ENCODE measurements at regions of chr11 and their contacts with region 1.

Region 1: GRCh38 chr11:36564376-36565030 is 3.3 kb upstream of the RAG1 start:
- DNase-seq: peak; percentile 69
- ATAC-seq: peak; percentile 66
- H3K4me3 Mint-ChIP-seq: peak overlapping the region; percentile 2
- H3K27ac Mint-ChIP-seq: no peak overlapping the region
- H3K4me1 Mint-ChIP-seq: no peaks in the 10 kb centered on the region
- H3K27me3 Mint-ChIP-seq: peaks cover 32% of the 10 kb centered on the region

Region 2: GRCh38 chr11:36361901-36362391 is 202.6 kb before region 1 on chr11:
- CTCF ChIA-PET with region 1: no interaction called
- POLR2A ChIA-PET with region 1: no interaction called
- intact Hi-C with region 1: no loop called
- DNase-seq: no peak
- ATAC-seq: peak; percentile 48
- H3K4me3 Mint-ChIP-seq: peak overlapping the region; percentile 45
- H3K27ac Mint-ChIP-seq: peak overlapping the region; percentile 80
- H3K4me1 Mint-ChIP-seq: peaks cover 54% of the 10 kb centered on the region
- H3K27me3 Mint-ChIP-seq: peaks cover 18% of the 10 kb centered on the region

Region 3: DNA sequence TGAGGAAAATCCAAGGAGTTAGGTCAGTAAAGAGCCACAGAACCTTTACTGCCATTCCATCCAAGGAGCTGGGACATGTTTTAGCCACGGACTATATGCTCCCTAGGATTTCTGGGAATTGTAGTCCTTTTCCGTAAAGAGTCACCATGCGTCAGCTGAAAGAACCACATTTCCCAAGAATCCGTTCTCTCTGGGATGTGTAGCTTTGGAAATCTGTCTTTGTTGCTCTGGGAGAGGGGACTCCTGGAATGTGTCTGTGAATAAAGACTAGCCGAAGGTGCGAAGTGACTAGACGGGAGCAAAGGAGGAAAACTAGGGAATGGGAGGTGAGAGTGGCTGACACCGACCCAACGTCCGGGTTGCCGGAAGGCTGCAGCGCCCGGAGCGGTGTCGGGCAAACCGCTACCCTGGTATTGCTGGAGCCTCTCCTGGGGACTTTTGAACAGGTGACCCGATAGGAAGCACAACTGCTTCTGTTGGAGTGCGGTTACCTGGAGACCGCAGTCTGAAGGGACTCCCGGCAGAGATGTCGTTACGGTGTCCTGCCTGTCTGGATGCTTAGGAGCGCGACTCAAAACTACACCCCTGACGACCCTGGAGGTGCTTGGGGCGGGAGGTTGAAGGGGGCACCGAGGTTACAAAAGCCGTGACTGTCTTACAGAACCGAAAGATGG is 29.9 kb after region 1 on chr11 and contains the start of gene IFTAP:
- CTCF ChIA-PET with region 1: interaction called, 11 read pairs
- POLR2A ChIA-PET with region 1: no interaction called
- intact Hi-C with region 1: no loop called
- DNase-seq: peak; percentile 62
- ATAC-seq: peak; percentile 86
- H3K4me3 Mint-ChIP-seq: peak within 1 kb of the TSS; percentile 86
- H3K27ac Mint-ChIP-seq: peak within 1 kb of the TSS; percentile 55
- H3K4me1 Mint-ChIP-seq: peaks cover 13% of the 10 kb centered on the region
- H3K27me3 Mint-ChIP-seq: peaks cover 18% of the 10 kb centered on the region
- total RNA-seq, gene IFTAP: 5.7 to 6.3 TPM

Region 4: GRCh38 chr11:36672813-36673450 is 108.4 kb after region 1 on chr11:
- CTCF ChIA-PET with region 1: interaction called, 49 read pairs
- POLR2A ChIA-PET with region 1: no interaction called
- intact Hi-C with region 1: loop called (anchors 1 kb)
- DNase-seq: no peak
- ATAC-seq: no peak
- H3K4me3 Mint-ChIP-seq: no peak overlapping the region
- H3K27ac Mint-ChIP-seq: no peak overlapping the region
- H3K4me1 Mint-ChIP-seq: no peaks in the 10 kb centered on the region
- H3K27me3 Mint-ChIP-seq: peaks cover 24% of the 10 kb centered on the region

Region 5: DNA sequence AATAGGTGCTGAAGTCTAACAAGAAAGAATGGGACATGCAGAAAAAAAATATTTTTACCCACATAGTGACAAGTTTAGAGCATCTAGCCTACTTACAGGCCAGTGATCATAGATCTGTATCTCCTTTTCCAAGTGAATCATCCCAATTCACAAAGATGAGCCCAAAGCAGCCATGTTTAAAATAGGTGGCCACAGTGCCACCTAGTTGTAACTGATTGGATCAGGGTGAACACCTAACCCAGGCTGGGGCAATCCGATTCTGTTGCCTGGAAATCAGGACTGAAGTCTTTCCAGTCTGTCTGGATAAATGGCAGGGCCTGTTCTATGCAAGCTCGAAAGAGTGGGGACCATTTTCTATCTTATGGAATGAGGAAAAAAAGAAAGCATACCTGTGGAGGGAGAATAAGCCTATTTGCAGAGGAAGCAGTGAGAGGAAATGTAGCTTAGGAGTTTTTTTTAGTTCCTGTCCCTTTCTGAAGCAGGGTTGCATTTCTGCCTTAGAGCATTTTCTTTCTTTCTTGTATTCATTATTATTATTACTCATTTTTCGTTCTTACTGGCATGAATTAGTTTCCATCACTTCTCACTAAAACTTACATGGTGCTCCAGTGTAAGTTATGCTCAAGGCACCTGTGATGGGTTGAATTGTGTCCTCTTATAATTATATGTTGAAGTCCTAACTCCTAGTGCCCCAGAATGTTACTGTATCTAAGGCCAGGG is 146.8 kb after region 1 on chr11:
- CTCF ChIA-PET with region 1: interaction called, 11 read pairs
- POLR2A ChIA-PET with region 1: no interaction called
- intact Hi-C with region 1: no loop called
- DNase-seq: peak; percentile 6
- ATAC-seq: no peak
- H3K4me3 Mint-ChIP-seq: no peak overlapping the region
- H3K27ac Mint-ChIP-seq: no peak overlapping the region
- H3K4me1 Mint-ChIP-seq: no peaks in the 10 kb centered on the region
- H3K27me3 Mint-ChIP-seq: peaks cover 14% of the 10 kb centered on the region

Region 6: GRCh38 chr11:36746886-36747710 is 182.6 kb after region 1 on chr11:
- CTCF ChIA-PET with region 1: interaction called, 158 read pairs
- POLR2A ChIA-PET with region 1: no interaction called
- intact Hi-C with region 1: loop called (anchors 1 kb)
- DNase-seq: peak; percentile 90
- ATAC-seq: peak; percentile 99
- H3K4me3 Mint-ChIP-seq: no peak overlapping the region
- H3K27ac Mint-ChIP-seq: no peak overlapping the region
- H3K4me1 Mint-ChIP-seq: peaks cover 8% of the 10 kb centered on the region
- H3K27me3 Mint-ChIP-seq: peaks cover 27% of the 10 kb centered on the region

Region 7: GRCh38 chr11:37026326-37026725 is 461.8 kb after region 1 on chr11:
- CTCF ChIA-PET with region 1: no interaction called
- POLR2A ChIA-PET with region 1: no interaction called
- intact Hi-C with region 1: no loop called
- DNase-seq: no peak
- ATAC-seq: no peak
- H3K4me3 Mint-ChIP-seq: no peak overlapping the region
- H3K27ac Mint-ChIP-seq: no peak overlapping the region
- H3K4me1 Mint-ChIP-seq: no peaks in the 10 kb centered on the region
- H3K27me3 Mint-ChIP-seq: no peaks in the 10 kb centered on the region